ENCODE measurements at regions of chr2 and their contacts with region 1.

Region 1: GRCh38 chr2:73444202-73444601 is 58.6 kb downstream of the ALMS1 start:
- DNase-seq: peak; percentile 77
- ATAC-seq: peak; percentile 97
- H3K4me3 ChIP-seq: no peak overlapping the region
- H3K27ac ChIP-seq: peak overlapping the region; percentile 32
- H3K4me1 ChIP-seq: peaks cover 16% of the 10 kb centered on the region
- H3K27me3 ChIP-seq: no peaks in the 10 kb centered on the region
- CTCF ChIP-seq: no peak
- EP300 ChIP-seq: no peak; a peak in 1 of 4 replicates
- POLR2A ChIP-seq: no peak
- RAD21 ChIP-seq: no peak

Region 2: DNA sequence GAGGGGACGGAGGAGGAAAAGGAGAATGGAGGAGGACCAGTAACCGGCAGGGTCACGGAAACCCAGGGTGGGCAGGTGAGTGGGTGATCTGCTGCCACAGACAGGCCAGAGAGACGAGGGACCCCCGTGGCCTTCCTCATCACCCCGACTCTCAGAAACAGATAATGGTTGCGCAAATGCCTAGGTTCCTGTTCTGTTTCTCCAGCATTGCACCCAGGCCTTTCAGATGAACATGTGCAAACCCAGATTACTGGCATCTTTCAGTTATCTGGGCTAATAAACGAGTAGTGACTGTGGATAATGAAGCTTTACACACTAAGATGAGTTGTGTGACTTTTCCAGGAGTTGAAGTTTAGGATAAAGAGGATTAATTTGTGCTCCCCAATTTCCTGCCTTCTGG is 587.0 kb after region 1 on chr2:
- CTCF ChIA-PET with region 1: no interaction called
- POLR2A ChIA-PET with region 1: no interaction called
- in situ Hi-C with region 1: no loop called
- intact Hi-C with region 1: loop called (anchors 5 kb)
- DNase-seq: no peak
- ATAC-seq: no peak
- H3K4me3 ChIP-seq: no peak overlapping the region
- H3K27ac ChIP-seq: no peak overlapping the region
- H3K4me1 ChIP-seq: peaks cover 13% of the 10 kb centered on the region
- H3K27me3 ChIP-seq: no peaks in the 10 kb centered on the region
- CTCF ChIP-seq: no peak
- EP300 ChIP-seq: no peak
- POLR2A ChIP-seq: no peak
- RAD21 ChIP-seq: no peak

Measured in HepG2 (cell line).